PC-3 (cell line): ENCODE measurements at regions of chr3 and their contacts with region 1.

Region 1: GRCh38 chr3:36677331-36678007 is 86.9 kb downstream of the DCLK3 start:
- DNase-seq: peak; percentile 97
- ATAC-seq: peak; percentile 80
- H3K4me3 ChIP-seq: no peak overlapping the region
- H3K27ac ChIP-seq: peak overlapping the region; percentile 76
- H3K4me1 ChIP-seq: peaks cover 29% of the 10 kb centered on the region
- H3K27me3 ChIP-seq: no peaks in the 10 kb centered on the region
- CTCF ChIP-seq: no peak

Region 2: GRCh38 chr3:36648241-36649034 is 29.0 kb before region 1 on chr3:
- CTCF ChIA-PET with region 1: no interaction called
- POLR2A ChIA-PET with region 1: no interaction called
- intact Hi-C with region 1: loop called (anchors 1 kb)
- DNase-seq: peak; percentile 94
- ATAC-seq: peak; percentile 91
- H3K4me3 ChIP-seq: peak overlapping the region; percentile 26; the same call in 1 of the 2 replicates
- H3K27ac ChIP-seq: peak overlapping the region; percentile 51
- H3K4me1 ChIP-seq: peaks cover 34% of the 10 kb centered on the region
- H3K27me3 ChIP-seq: no peaks in the 10 kb centered on the region
- CTCF ChIP-seq: no peak